ENCODE measurements at regions of chr18 and their contacts with region 1.

Region 1: GRCh38 chr18:13481820-13482617 is 244.3 kb downstream of the FAM210A start:
- ATAC-seq: no peak
- H3K4me3 ChIP-seq: no peak overlapping the region
- H3K27ac ChIP-seq: no peak overlapping the region
- H3K4me1 ChIP-seq: peaks cover 4 to 16% of the 10 kb centered on the region in 2 donors

Region 2: GRCh38 chr18:13147130-13147529 is 334.9 kb before region 1 on chr18:
- in situ Hi-C with region 1: no loop called
- ATAC-seq: peak in 1 of 8 experiments; percentile 58
- H3K4me3 ChIP-seq: no peak overlapping the region
- H3K27ac ChIP-seq: no peak overlapping the region
- H3K4me1 ChIP-seq: no peaks in the 10 kb centered on the region

Region 3: GRCh38 chr18:13577091-13577697 is 95.2 kb after region 1 on chr18:
- in situ Hi-C with region 1: loop called in 1 of 9 experiments (anchors 25 kb)
- ATAC-seq: peak in 5 of 8 experiments; percentile 47 to 86 (median 83)
- H3K4me3 ChIP-seq: no peak overlapping the region
- H3K27ac ChIP-seq: no peak overlapping the region
- H3K4me1 ChIP-seq: peaks cover 20 to 30% of the 10 kb centered on the region in 2 donors

Measured in motor neuron (in vitro differentiated cells).